ENCODE measurements at regions of chr7 and their contacts with region 1.

Region 1: DNA sequence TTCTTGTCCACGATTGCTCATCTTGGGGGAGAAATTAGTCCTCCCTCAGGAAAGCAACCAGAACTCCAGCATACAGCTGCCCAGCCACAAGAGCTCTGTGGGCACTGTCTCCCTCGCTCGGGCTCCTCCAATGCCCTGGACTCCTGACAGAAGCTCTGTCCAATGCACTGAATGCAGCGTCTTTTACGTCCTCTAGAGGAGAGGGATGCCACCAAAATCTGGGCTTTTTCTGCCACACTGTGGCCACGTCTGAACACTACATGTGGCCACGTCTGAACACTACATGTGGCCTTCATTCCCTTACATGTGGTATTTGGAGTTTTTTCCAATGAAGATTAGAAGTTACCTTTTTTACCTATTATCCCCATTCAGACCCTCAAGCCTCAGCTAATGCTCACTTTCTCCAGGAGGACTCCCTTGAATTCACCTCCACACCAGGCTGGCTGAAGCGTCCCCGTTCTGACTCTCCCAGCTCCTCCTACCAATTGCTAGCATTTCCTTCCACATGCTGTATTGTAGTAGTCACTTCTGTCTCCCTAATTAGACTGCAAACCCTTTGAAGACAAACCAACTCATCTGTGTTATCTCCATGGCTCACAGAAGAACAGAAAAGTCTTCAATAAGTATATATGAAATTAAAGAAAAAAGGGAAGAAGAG is 134.3 kb upstream of the PDE1C start:
- DNase-seq: peak; percentile 87
- H3K4me3 Mint-ChIP-seq: peak overlapping the region; percentile 43
- H3K27ac Mint-ChIP-seq: no peak overlapping the region
- H3K4me1 Mint-ChIP-seq: peaks cover 27% of the 10 kb centered on the region
- H3K27me3 Mint-ChIP-seq: peaks cover 30% of the 10 kb centered on the region
- CTCF ChIP-seq: peak; percentile 94

Region 2: DNA sequence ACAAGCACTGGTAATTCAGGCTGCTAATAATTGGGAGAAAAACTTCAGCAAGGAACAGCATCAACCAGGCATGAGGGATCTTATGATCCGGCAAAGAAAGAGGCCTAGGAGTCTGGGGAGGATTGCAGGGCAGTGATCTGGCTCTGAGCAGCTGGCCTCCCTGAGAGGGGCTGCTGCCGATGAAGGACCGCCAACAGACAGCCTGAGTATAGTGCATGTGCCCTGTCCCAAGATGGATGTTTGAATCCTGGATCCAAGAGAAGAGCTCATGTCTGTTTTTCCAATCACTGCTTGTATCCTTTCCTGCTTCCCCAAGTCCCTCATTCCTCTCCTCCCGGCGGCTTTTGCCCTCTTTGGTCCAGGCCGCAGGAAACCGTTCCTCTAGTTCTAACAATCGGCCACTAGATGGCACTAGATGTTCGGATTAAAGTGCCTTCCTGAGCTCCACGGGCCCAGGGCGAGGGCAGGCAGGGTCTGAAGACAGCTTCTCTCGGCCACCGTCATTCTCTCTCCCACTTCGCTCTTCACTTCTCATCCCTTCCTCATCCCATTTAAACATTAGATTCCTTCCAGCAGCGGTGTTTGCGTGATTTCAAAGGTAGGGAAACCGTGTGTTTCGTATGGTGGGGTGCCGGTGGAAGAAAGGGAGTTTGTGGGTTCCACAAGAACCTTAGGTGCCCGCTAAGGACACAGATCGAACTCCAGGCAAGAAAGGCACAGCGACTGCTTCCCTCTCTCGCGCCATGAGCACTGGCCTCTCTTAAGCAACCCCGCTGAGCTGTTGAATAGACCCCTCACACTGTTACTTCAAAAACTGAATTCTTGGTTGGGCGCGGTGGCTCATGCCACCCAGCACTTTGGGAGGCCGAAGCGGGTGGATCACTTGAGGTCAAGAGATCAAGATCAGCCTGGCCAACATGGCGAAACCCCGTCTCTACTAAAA is 1070.0 kb before region 1 on chr7:
- CTCF ChIA-PET with region 1: interaction called, 15 read pairs
- intact Hi-C with region 1: loop called (anchors 5 kb)
- DNase-seq: peak; percentile 87
- H3K4me3 Mint-ChIP-seq: no peak overlapping the region
- H3K27ac Mint-ChIP-seq: no peak overlapping the region
- H3K4me1 Mint-ChIP-seq: no peaks in the 10 kb centered on the region
- H3K27me3 Mint-ChIP-seq: peaks cover 50% of the 10 kb centered on the region
- CTCF ChIP-seq: peak; percentile 92

Region 3: DNA sequence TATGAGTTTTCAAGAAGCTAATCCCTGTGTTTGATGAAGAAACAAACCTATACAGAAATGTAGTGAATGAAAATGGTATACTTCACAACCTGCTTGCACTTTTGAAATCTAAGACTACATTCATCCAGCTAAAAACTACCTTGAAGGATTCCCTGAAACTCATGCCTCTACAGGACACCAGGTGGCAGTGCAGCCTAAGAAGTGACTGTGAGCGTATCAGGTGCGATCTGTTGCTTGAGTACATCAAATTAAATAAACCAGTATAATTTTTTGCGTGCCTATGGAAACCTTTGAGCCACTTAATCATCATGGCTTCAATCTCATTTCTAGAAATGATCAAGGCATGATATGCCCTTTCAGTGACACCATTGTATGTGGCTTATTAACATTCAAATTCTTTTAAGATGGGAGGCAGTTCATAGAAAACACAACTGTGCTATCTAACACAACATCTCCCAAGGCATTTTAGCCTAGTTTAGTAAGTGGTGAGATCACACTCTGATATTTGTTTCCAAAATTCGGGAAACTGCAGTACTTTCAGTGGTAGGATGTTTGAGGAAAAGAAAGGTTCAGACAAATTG is 460.1 kb before region 1 on chr7:
- CTCF ChIA-PET with region 1: interaction called, 74 read pairs
- intact Hi-C with region 1: loop called (anchors 1 kb)
- DNase-seq: peak; percentile 82
- H3K4me3 Mint-ChIP-seq: no peak overlapping the region
- H3K27ac Mint-ChIP-seq: no peak overlapping the region
- H3K4me1 Mint-ChIP-seq: peaks cover 21% of the 10 kb centered on the region
- H3K27me3 Mint-ChIP-seq: no peaks in the 10 kb centered on the region
- CTCF ChIP-seq: peak; percentile 93

Region 4: DNA sequence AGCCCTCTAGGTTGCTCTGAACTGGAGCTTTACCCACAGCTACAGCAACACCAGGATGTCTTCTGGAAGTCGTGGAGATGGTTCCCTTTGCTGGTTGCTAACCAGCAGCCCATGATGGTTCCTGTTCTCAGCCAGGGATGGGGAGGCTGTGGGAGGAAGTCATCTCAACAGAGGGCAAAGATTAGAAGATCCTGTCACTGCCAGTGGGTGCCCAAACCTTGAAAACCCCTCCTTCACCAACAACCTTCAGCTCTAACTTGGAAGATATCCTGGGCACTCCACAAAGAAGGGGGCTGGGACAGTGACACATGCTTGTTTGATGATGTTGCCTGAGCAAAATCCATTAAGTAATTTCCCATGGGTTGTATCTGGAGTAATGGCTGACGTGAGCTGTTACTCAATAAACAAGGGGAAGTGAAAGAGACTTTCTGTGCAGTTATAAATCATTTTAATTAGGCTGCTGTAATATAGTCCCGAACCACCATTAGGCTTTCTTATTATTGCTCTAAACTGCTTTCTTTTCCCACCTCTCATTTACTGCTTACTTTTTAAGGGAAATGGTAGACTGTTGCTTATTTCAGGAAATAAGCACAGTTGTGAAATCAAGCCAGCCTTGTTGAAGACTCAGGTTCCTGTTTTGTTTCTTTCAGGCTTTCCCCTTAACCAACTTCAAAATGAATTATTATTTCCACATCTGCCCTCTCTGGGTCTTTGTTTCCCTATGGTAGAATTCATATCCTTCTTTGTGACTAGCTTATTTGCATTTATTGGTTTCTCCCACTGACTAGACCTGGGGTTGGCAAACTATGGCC is 392.6 kb before region 1 on chr7:
- CTCF ChIA-PET with region 1: interaction called, 29 read pairs
- intact Hi-C with region 1: loop called (anchors 1 kb)
- DNase-seq: no peak
- H3K4me3 Mint-ChIP-seq: no peak overlapping the region
- H3K27ac Mint-ChIP-seq: no peak overlapping the region
- H3K4me1 Mint-ChIP-seq: peaks cover 25% of the 10 kb centered on the region
- H3K27me3 Mint-ChIP-seq: no peaks in the 10 kb centered on the region
- CTCF ChIP-seq: no peak

Region 5: DNA sequence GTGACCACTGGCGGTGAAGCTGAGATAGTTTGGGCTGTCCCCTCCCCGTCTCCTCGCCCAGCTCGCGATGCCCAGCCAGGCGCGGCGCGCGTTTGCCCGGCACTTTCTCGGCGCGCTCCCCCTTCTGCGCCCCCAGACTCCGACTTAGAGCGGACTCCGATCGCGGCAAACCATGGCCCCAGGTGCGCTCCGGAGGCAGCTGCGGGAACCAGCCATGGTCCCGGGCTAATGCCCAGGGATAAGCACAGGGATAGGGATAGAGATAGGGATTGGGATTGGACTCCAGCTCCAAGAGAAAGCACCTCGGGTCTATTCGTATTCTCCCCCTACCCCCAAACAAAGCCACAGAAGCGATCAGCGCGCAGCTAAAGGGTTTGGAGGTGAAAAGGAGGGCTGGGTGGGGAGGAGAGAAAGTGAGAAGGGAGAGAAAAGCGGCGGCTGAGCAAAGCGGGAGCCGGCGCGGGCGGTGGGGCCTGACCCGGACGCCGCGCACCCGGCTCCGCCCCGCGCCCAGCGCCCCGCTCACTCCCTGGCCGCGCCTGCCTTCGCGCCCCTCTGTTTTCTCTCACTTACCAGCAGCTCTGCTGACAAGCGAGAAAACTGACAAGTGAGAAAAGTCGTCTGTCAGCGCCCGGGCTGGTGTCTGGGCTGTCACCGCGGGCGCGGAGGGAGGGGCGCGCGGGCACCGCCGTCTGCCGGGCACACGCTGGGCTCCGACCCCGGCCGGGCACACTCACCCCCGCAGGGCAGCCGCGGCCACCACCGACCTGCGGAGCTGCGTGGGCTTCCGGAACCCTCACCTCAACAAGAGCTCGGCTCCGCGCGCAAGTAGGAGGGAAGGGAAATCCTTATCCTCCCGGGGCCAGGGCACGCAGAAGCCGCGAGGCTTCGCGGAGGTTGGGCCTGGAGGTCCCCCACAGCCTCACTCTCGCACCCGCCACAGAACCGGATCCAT is 133.8 kb before region 1 on chr7 and contains the start of gene PDE1C:
- CTCF ChIA-PET with region 1: no interaction called
- intact Hi-C with region 1: loop called (anchors 5 kb)
- DNase-seq: peak; percentile 65
- H3K4me3 Mint-ChIP-seq: peak within 1 kb of the TSS; percentile 95
- H3K27ac Mint-ChIP-seq: peak within 1 kb of the TSS; percentile 48
- H3K4me1 Mint-ChIP-seq: peaks cover 64% of the 10 kb centered on the region
- H3K27me3 Mint-ChIP-seq: no peaks in the 10 kb centered on the region
- CTCF ChIP-seq: no peak
- total RNA-seq, gene PDE1C: 25.1 and 34.0 TPM in 2 replicates

Region 6: DNA sequence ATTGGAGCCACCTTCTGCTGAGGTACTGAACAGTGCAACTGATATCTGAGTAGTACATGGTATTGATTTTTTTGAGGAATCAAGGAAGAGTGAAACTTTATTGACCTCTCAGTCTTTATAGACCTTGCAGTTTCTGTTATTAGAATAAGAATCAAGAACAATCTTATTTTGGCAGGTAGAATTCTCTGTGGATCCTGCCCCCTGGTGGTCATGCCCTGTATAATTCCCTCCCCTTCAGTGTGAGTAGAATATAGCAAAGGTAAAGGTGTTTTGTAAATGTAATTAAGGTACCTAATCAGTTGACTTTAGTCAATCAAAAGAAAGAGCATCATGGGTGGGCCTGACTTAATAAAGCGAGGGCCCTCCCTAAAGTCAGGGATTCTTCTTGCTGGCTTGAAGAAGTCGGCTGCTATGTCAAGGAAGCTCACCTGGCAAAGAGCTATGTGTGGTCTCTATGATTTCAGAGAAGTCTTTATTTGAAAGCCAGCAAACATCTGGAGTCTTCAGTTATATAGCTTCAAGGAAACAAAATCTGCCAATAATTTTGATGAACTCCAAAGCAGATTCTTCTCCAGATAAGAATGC is 142.8 kb after region 1 on chr7:
- CTCF ChIA-PET with region 1: interaction called, 13 read pairs
- intact Hi-C with region 1: no loop called
- DNase-seq: peak; percentile 67
- H3K4me3 Mint-ChIP-seq: no peak overlapping the region
- H3K27ac Mint-ChIP-seq: no peak overlapping the region
- H3K4me1 Mint-ChIP-seq: no peaks in the 10 kb centered on the region
- H3K27me3 Mint-ChIP-seq: peaks cover 59% of the 10 kb centered on the region
- CTCF ChIP-seq: peak; percentile 88